Caco-2 (cell line): ENCODE measurements at regions of chr11 and their contacts with region 1.

Region 1: DNA sequence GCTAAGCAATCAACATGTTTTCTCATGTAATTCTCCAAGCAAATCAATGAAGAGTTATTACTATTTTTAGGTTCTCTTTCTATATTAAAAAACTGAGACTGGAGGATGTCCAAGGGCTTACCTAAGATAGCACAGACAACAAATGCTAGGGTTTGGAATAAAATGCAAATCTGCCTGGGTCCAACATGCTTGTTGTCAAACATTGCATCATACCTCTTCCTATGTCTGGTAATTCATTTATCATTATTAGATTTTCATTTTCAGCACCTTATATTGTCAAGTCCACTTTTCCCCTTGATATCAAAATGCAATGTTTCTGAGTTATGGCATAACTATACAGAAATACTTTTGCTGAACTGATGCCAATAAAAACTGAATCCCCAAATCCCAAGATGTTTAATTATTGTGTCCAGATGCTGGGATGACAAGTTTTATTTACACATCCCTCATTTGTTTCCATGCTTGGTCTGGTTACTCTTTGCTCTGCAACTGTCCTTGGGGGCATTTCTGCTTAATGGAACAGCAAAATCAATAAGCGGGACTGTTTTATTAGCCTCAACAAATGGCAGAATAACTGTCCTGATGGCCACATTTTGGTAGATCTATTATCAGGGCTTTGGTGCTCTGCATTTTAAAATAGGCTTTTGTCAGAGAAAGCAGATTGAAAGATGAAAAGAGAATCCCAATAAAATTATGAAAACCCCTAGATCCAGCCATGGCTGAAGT is 86.0 kb downstream of the C11orf87 start:
- DNase-seq: no peak
- H3K4me3 ChIP-seq: no peak overlapping the region
- H3K4me3 Mint-ChIP-seq: no peak overlapping the region
- H3K27ac Mint-ChIP-seq: no peak overlapping the region
- H3K4me1 ChIP-seq: no peaks in the 10 kb centered on the region
- H3K4me1 Mint-ChIP-seq: no peaks in the 10 kb centered on the region
- H3K27me3 ChIP-seq: no peaks in the 10 kb centered on the region
- H3K27me3 Mint-ChIP-seq: peaks cover 9% of the 10 kb centered on the region
- CTCF ChIP-seq: no peak

Region 2: GRCh38 chr11:109677876-109678275 is 169.9 kb after region 1 on chr11:
- CTCF ChIA-PET with region 1: no interaction called
- POLR2A ChIA-PET with region 1: no interaction called
- intact Hi-C with region 1: loop called (anchors 10 kb)
- DNase-seq: no peak
- H3K4me3 ChIP-seq: no peak overlapping the region
- H3K4me3 Mint-ChIP-seq: no peak overlapping the region
- H3K27ac Mint-ChIP-seq: no peak overlapping the region
- H3K4me1 ChIP-seq: no peaks in the 10 kb centered on the region
- H3K4me1 Mint-ChIP-seq: no peaks in the 10 kb centered on the region
- H3K27me3 ChIP-seq: no peaks in the 10 kb centered on the region
- H3K27me3 Mint-ChIP-seq: peaks cover 4% of the 10 kb centered on the region
- CTCF ChIP-seq: no peak